Posterior vena cava (tissue), 2 donors: ENCODE measurements at regions of chr5 and their contacts with region 1.

Region 1: DNA sequence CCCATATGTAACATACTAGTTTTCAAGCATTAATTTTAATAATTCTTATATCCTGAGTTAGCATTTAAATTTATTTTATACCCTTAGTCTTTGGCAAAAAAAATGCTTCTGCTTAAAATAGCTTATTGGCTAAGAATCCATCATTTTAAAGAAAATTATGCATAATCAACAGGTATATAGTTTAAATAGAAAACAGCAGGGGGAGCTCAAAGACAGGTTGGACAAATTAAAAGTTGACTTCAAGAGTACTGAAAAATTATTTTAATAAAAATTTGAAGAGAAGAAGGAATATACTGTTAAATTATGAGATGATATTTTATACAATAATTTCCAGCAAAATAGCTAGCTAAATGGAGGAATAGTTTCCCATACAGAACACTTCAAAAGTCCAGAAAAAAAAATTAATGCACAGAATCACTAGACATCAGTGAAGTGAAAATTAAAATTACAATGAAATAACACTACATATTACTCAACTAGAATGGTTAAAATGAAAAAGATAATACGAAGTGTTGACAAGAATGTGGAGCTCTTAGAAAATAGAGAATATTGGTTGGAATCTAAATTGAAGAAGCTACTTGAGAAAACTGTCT is 387.1 kb downstream of the PDE4D start:
- DNase-seq: no peak

Region 2: GRCh38 chr5:59542851-59543820 is 36.8 kb after region 1 on chr5:
- intact Hi-C with region 1: no loop called
- DNase-seq: no peak

Region 3: DNA sequence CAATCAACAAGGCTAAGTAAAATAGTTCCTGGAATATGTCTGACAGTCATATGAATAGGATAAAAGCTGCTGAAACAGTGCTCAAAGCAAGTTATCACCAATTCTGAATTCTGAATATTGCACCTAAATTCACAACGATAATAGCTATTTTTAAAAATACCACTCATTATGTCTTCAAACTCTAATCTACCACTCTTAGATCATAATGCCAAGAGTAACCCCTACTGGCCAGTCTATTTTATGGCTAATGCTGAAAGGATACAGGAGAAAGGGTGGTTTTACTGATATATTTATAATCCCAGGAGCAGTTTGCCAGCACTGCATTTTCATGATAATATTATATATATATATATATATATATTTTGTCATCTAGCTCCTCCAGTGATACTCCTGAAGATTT is 154.4 kb after region 1 on chr5:
- intact Hi-C with region 1: loop called in 1 of 2 experiments (anchors 10 kb)
- DNase-seq: no peak